ENCODE measurements at regions of chr1 and their contacts with region 1.

Region 1: DNA sequence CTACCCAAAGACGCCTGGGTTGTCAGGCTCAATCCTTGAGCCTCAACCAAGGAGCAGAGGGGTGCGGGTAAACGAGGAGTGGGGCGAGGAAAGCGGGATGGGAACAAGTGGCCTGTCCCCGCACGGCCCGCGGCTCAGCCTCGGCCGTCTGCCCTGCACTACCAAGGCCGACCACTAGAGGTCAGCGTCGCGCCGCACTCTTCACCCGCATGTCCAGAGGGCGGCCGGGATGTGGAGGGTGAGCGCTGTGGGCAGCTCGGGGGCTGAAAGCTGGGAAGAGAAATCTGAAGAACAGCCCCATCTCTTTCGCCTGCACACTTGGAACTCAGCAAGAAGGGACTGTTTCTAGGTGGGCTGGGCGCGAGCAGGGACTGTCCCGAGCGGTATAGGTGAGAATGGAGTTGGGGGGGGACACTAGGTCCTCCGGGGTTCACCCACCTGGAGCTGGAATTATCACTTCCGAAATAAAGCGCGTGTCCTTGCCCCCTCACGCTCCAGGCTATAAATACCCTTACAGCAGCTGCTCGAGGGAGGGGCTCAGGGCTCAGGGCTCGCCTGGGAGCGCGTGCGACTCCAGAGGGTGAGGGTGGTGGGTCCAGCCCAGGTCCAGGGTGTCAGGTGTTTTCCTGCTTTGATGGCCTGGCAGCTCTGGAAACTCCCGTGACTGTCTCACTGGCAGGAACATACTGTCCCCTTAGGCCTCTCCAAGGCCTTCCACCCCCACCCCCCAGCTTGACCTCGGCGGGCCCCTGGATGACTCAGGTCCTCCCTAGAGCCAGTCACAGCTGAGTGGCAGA is 9.8 kb downstream of the SLC30A2 start:
- DNase-seq: peak; percentile 87 to 96
- ATAC-seq: peak; percentile 80 to 88 (median 82)
- H3K4me3 ChIP-seq: peak overlapping the region; percentile 80
- H3K27ac ChIP-seq: peak overlapping the region; percentile 94
- H3K4me1 ChIP-seq: peaks cover 35% of the 10 kb centered on the region
- H3K27me3 ChIP-seq: no peaks in the 10 kb centered on the region
- CTCF ChIP-seq: peak; percentile 100

Region 2: DNA sequence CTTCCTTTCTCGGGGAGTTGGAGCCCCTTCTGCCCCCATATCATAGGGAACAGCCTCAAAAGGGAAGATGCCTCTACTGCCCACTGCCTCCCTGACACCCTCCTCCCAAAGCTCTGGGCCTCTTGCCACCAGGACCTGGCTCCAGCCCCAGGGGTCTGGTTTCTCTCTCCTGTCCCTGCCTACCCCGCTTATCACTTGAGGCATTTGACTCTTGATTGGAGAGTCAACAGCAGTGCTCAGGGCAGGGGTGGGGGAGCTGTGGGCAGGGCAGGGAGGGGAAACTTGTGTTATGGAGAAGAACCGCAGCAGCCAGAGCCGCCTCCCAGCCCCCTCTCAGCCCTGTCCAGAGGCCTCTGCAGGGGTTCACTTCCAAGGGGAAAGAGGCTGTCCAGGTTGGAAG is 30.7 kb after region 1 on chr1:
- intact Hi-C with region 1: loop called in 1 of 2 experiments (anchors 2 kb)
- DNase-seq: peak in 1 of 2 donors; percentile 56
- ATAC-seq: peak; percentile 4 to 54 (median 10)
- H3K4me3 ChIP-seq: peak overlapping the region; percentile 72
- H3K27ac ChIP-seq: peak overlapping the region; percentile 88
- H3K4me1 ChIP-seq: peaks cover 29% of the 10 kb centered on the region
- H3K27me3 ChIP-seq: no peaks in the 10 kb centered on the region
- CTCF ChIP-seq: no peak

Region 3: GRCh38 chr1:26094677-26095383 is 58.7 kb after region 1 on chr1:
- intact Hi-C with region 1: loop called (anchors 5 kb)
- DNase-seq: peak; percentile 58 to 81
- ATAC-seq: peak; percentile 76 to 86 (median 81)
- H3K4me3 ChIP-seq: peak overlapping the region; percentile 26
- H3K27ac ChIP-seq: peak overlapping the region; percentile 76
- H3K4me1 ChIP-seq: peaks cover 19% of the 10 kb centered on the region
- H3K27me3 ChIP-seq: no peaks in the 10 kb centered on the region
- CTCF ChIP-seq: peak; percentile 20

Region 4: DNA sequence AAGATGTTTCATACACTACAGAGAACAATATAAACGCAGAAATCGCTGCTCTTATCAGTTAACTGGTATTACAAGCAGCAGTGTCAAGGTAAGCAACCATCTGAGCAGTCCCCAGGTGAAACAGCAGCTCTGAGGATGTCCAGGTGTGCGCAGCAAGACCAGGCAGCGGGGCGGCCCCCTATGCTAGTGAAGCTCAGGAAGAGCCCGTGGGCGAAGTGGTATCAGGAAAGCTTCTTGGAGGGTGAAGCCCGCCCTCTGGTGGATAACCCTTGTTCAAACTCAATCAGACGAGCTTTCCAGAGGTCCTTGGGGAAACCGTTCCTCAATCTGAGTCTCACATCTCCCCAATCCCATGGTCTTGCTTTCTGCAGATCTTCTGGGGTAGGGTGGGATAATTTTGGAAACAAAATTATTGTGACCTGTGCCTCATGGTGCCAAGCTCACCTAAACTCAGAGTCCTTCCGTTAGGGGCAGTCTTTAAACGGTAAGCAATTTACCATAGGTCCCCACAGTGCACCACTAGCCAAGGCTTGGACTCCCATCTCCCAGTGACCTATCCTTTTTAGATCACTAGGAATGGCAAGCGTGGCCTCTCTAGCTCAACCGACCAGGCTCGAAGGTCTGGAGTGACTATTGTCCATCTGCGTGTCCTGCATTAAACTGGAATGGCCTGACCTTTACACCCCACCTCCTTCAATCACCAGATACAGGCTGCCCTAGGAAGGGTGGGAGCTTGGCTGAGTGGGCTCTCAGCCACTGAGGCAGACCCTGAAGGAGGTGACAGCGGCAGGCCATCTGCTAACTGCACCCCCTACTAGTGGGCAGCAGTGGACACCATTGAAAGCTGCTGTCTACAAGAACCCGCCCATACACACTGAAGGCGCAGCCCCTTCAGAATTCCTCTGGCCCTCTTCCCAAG is 109.1 kb after region 1 on chr1:
- intact Hi-C with region 1: loop called in 1 of 2 experiments (anchors 2 kb)
- DNase-seq: peak; percentile 76 to 86
- ATAC-seq: peak; percentile 93 to 98 (median 96)
- H3K4me3 ChIP-seq: no peak overlapping the region
- H3K27ac ChIP-seq: no peak overlapping the region
- H3K4me1 ChIP-seq: no peaks in the 10 kb centered on the region
- H3K27me3 ChIP-seq: no peaks in the 10 kb centered on the region
- CTCF ChIP-seq: peak; percentile 85

Region 5: DNA sequence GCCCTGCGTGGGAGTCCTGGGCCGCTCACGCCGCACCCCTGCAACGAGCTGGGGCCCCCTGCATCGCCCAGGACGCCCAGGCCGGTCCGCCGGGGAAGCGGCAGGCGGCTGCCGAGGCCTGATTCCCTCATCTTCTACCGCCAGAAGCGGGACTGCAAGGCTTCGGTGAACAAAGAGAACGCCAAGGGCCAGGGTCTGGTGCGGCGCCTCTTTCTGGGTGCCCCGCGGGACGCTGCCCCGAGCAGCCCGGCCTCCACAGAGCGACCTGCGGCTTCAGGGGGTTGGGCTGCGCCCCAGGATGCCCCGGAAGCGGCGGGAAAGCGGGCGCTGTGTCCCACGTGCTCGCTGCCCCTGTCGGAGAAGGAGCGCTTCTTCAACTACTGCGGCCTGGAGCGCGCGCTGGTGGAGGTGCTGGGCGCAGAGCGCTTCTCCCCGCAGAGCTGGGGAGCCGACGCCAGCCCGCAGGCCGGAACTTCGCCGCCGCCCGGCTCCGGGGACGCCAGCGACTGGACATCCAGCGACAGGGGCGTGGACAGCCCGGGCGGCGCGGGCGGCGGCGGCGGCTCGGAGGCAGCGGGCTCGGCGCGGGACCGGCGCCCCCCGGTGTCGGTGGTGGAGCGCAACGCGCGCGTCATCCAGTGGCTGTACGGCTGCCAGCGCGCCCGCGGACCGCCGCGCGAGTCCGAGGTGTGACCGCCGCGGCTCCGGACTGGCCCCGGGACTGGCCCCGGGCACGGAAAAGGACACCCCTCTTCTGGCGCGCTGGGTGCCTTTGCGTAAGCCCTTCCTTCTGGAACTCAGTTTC is 125.5 kb after region 1 on chr1:
- intact Hi-C with region 1: loop called in 1 of 2 experiments (anchors 5 kb)
- DNase-seq: peak; percentile 69 to 88
- ATAC-seq: peak; percentile 78 to 87 (median 86)
- H3K4me3 ChIP-seq: peak overlapping the region; percentile 81
- H3K27ac ChIP-seq: peak overlapping the region; percentile 83
- H3K4me1 ChIP-seq: peaks cover 13% of the 10 kb centered on the region
- H3K27me3 ChIP-seq: no peaks in the 10 kb centered on the region
- CTCF ChIP-seq: peak; percentile 29

Region 6: GRCh38 chr1:26177182-26177684 is 141.1 kb after region 1 on chr1 and contains the start of gene CNKSR1:
- intact Hi-C with region 1: no loop called
- DNase-seq: no peak
- ATAC-seq: no peak
- H3K4me3 ChIP-seq: no peak within 1 kb of the TSS
- H3K27ac ChIP-seq: peak within 1 kb of the TSS; percentile 16
- H3K4me1 ChIP-seq: peaks cover 1% of the 10 kb centered on the region
- H3K27me3 ChIP-seq: no peaks in the 10 kb centered on the region
- CTCF ChIP-seq: no peak
- total RNA-seq, gene CNKSR1: 54.8 to 90.4 (median 73.0) TPM